Motor neuron (in vitro differentiated cells): ENCODE measurements at regions of chr12 and their contacts with region 1.

Region 1: DNA sequence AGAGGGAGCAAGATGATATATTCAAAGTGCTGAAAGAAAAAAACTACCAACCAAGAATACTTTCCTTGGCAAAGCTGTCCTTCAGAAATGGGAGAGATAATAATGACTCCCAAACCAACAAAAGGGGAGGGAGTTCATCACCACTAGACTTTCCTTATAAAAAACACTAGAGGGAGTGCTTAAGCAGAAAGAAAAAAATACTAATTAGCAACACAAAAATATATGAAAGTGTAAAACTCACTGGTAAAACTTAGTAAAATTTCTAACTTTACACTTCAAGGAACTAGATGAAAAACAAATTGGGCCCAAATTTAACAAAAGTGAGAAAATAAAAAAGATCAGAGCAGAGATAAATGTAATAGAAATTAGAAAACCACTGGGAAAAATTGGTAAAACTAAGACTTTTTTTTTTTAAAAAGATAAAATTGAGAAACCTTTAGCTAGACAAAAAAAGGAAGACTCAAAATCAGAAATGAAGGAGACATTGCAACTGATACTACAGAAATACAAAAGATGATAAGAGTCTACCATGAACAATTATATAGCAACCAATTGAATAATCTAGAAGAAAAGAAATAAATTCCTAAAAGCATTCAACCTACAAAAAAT is 60.4 kb upstream of the FAR2 start:
- ATAC-seq: no peak
- H3K4me3 ChIP-seq: no peak overlapping the region
- H3K27ac ChIP-seq: no peak overlapping the region
- H3K4me1 ChIP-seq: peaks cover 0 to 6% of the 10 kb centered on the region in 2 donors

Region 2: DNA sequence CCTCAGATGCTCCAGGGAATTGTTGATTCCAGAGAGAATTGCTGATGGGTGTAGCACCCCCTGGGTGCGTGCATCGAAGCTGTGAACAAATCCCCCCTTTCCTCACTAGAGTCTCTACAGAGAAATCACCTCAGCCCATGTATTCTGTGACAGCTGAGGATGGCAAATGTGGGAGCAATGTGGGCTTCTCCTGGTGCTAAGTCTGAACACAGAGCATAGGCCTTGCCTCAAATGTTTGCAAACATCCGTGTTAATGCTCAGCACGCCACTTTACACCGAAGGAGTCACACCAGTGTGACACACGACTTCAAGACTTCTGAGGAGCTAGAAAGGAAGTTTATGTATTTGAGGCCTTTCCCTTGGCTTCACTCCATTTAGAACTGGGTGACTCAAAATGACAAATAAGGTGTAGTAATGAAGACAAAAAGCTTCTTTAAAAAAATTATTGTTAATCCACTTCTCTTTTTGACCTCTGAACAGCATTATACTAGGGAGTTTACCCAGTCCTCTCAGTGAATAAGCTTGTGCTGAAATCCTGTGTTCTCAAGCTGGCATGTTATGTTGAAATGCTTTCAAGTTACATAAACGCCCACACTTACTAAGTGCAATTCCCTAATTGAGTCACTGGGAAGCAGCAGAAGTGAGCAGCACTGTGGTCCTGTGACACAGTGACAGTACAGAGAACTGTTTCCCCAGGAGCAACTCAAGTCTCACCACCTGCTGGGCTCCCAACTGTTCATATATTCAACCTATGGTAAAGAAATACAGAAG is 153.3 kb after region 1 on chr12:
- in situ Hi-C with region 1: loop called in 1 of 9 experiments (anchors 25 kb)
- ATAC-seq: peak; percentile 48 to 98 (median 70)
- H3K4me3 ChIP-seq: no peak overlapping the region
- H3K27ac ChIP-seq: no peak overlapping the region
- H3K4me1 ChIP-seq: peaks cover 0 to 12% of the 10 kb centered on the region in 2 donors

Region 3: GRCh38 chr12:29317556-29318363 is 229.0 kb after region 1 on chr12:
- in situ Hi-C with region 1: loop called in 1 of 9 experiments (anchors 25 kb)
- ATAC-seq: peak; percentile 93 to 100 (median 98)
- H3K4me3 ChIP-seq: no peak overlapping the region
- H3K27ac ChIP-seq: no peak overlapping the region
- H3K4me1 ChIP-seq: peaks cover 0 to 7% of the 10 kb centered on the region in 2 donors